ENCODE measurements at regions of chr12 and their contacts with region 1.

Region 1: DNA sequence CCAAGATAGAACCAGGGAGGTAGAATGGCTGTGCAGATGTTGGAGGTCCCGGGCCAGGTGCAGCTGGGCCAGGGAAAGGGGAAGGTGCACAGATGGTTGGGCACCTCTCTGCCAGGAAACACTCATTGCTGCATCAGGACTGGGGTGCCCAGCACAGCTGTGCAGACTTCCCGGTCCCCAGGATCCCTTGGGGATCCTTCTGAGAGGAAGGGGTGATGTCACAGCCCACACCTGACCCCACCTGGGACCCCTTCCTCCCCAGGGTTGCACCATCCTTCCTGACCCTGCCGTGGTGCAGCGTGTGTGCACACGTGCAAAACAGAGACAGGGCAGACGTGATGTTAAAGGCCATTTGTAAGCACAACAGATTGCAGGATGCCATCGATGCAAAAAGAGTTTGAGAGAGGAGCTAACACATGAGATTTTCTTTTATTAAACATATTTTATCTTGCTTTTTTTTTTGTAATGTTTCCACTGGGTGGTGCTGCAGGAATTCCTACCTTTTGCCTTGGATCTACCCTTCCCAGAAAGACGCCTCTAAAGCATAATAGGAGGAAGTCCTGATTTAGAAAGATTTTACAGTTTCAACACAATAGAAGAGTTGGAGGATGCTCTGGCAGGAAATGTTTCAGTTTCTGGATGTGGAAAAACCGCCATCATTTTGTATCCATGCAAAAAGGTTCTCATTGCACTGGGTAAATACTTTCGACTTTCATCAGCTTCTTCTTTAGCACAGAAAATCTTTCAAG is 14.8 kb downstream of the ELK3 start:
- DNase-seq: no peak
- ATAC-seq: peak; percentile 55 to 69
- H3K4me3 ChIP-seq: no peak overlapping the region
- H3K27ac ChIP-seq: peak overlapping the region in 2 of 4 donors; percentile 34 to 55
- H3K4me1 ChIP-seq: peaks cover 22 to 27% of the 10 kb centered on the region in 2 donors
- H3K27me3 ChIP-seq: no peaks in the 10 kb centered on the region
- CTCF ChIP-seq: peak in 1 of 5 experiments; percentile 13
- POLR2A ChIP-seq: no peak

Region 2: GRCh38 chr12:95881331-95881955 is 327.5 kb before region 1 on chr12:
- in situ Hi-C with region 1: no loop called
- intact Hi-C with region 1: no loop called
- DNase-seq: no peak
- ATAC-seq: no peak
- H3K4me3 ChIP-seq: no peak overlapping the region
- H3K27ac ChIP-seq: no peak overlapping the region
- H3K4me1 ChIP-seq: peaks cover 0 to 5% of the 10 kb centered on the region in 2 donors
- H3K27me3 ChIP-seq: no peaks in the 10 kb centered on the region
- CTCF ChIP-seq: no peak
- POLR2A ChIP-seq: no peak

Region 3: GRCh38 chr12:96061864-96062453 is 147.0 kb before region 1 on chr12:
- in situ Hi-C with region 1: loop called (anchors 5 to 10 kb)
- intact Hi-C with region 1: no loop called
- DNase-seq: peak; percentile 32 to 42
- ATAC-seq: peak; percentile 52 to 62
- H3K4me3 ChIP-seq: no peak overlapping the region
- H3K27ac ChIP-seq: no peak overlapping the region
- H3K4me1 ChIP-seq: no peaks in the 10 kb centered on the region
- H3K27me3 ChIP-seq: no peaks in the 10 kb centered on the region
- CTCF ChIP-seq: peak; percentile 45 to 75 (median 72)
- POLR2A ChIP-seq: no peak

Region 4: GRCh38 chr12:96069511-96070231 is 139.3 kb before region 1 on chr12:
- in situ Hi-C with region 1: loop called (anchors 5 to 10 kb)
- intact Hi-C with region 1: no loop called
- DNase-seq: no peak
- ATAC-seq: no peak
- H3K4me3 ChIP-seq: no peak overlapping the region
- H3K27ac ChIP-seq: no peak overlapping the region
- H3K4me1 ChIP-seq: no peaks in the 10 kb centered on the region
- H3K27me3 ChIP-seq: no peaks in the 10 kb centered on the region
- CTCF ChIP-seq: no peak
- POLR2A ChIP-seq: no peak

Measured in gastrocnemius medialis (tissue), 4 donors.